GM12878 (cell line): ENCODE measurements at regions of chr1 and their contacts with region 1.

Region 1: GRCh38 chr1:181479137-181479745 is 4.1 kb upstream of the CACNA1E start:
- DNase-seq: peak; percentile 56
- ATAC-seq: peak; percentile 66
- H3K4me3 ChIP-seq: no peak overlapping the region
- H3K27ac ChIP-seq: no peak overlapping the region
- H3K4me1 ChIP-seq: peaks cover 20% of the 10 kb centered on the region
- H3K27me3 ChIP-seq: no peaks in the 10 kb centered on the region
- CTCF ChIP-seq: peak; percentile 87 to 95 (median 92)
- EP300 ChIP-seq: no peak
- POLR2A ChIP-seq: no peak
- RAD21 ChIP-seq: peak; percentile 95

Region 2: DNA sequence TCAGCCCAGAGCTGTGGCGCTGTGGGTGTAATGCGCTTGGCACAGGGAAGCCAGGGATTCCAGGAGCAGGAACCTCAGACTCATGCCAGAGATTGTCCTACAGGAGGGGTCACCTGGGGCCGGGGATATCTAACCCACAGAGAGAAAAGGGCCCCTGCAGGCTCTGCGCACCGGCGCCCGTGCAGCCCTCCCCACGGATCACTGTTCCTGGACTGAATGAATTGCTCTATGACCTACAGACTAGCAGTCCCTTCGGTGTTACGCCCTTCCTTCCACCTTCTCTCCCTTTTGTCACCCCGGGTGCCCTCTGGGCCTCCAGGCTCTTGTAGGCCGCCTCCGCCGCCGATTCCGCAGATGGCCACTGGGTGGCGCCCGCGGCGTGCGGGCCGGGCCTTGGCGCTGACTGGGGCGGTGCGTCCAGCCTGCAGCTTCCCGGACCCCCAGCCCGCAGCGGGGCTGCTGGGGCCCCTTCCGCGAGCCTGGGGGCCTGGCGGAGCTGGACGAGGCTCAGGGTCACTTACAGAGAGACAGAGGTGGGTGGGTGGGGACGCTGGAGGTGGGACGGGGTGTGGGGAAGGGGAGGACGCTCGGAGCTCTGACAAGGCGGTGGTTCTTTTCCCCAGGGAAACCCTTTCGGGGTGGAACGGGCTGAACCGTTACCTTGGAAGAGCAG is 289.4 kb before region 1 on chr1:
- CTCF ChIA-PET with region 1: interaction called, 10 read pairs
- POLR2A ChIA-PET with region 1: no interaction called
- RAD21 ChIA-PET with region 1: interaction called, 9 read pairs
- SMC1A ChIA-PET with region 1: interaction called, 20 read pairs
- in situ Hi-C with region 1: no loop called
- intact Hi-C with region 1: loop called (anchors 5 kb)
- DNase-seq: no peak
- ATAC-seq: peak; percentile 98
- H3K4me3 ChIP-seq: no peak overlapping the region
- H3K27ac ChIP-seq: no peak overlapping the region
- H3K4me1 ChIP-seq: no peaks in the 10 kb centered on the region
- H3K27me3 ChIP-seq: no peaks in the 10 kb centered on the region
- CTCF ChIP-seq: peak; percentile 95 to 98 (median 97)
- EP300 ChIP-seq: no peak
- POLR2A ChIP-seq: no peak
- RAD21 ChIP-seq: peak; percentile 99

Region 3: GRCh38 chr1:181219938-181220337 is 259.3 kb before region 1 on chr1:
- CTCF ChIA-PET with region 1: no interaction called
- POLR2A ChIA-PET with region 1: no interaction called
- RAD21 ChIA-PET with region 1: no interaction called
- SMC1A ChIA-PET with region 1: no interaction called
- in situ Hi-C with region 1: no loop called
- intact Hi-C with region 1: no loop called
- DNase-seq: no peak
- ATAC-seq: no peak
- H3K4me3 ChIP-seq: no peak overlapping the region
- H3K27ac ChIP-seq: no peak overlapping the region
- H3K4me1 ChIP-seq: no peaks in the 10 kb centered on the region
- H3K27me3 ChIP-seq: peaks cover 0 to 2% of the 10 kb centered on the region in 2 experiments; a peak in 2 of 4 replicates
- CTCF ChIP-seq: no peak
- EP300 ChIP-seq: no peak
- POLR2A ChIP-seq: no peak
- RAD21 ChIP-seq: no peak

Region 4: GRCh38 chr1:181356505-181357340 is 122.5 kb before region 1 on chr1:
- CTCF ChIA-PET with region 1: no interaction called
- POLR2A ChIA-PET with region 1: no interaction called
- RAD21 ChIA-PET with region 1: no interaction called
- SMC1A ChIA-PET with region 1: no interaction called
- in situ Hi-C with region 1: no loop called
- intact Hi-C with region 1: no loop called
- DNase-seq: no peak
- ATAC-seq: no peak; the same call in 2 of the 3 replicates
- H3K4me3 ChIP-seq: no peak overlapping the region
- H3K27ac ChIP-seq: no peak overlapping the region
- H3K4me1 ChIP-seq: no peaks in the 10 kb centered on the region
- H3K27me3 ChIP-seq: 0 out of 4 replicates have a peak, but pooled peaks cover 0 to 4% of the 10 kb centered on the region in 2 experiments
- CTCF ChIP-seq: no peak
- EP300 ChIP-seq: no peak
- POLR2A ChIP-seq: no peak
- RAD21 ChIP-seq: no peak

Region 5: GRCh38 chr1:181438013-181438412 is 41.2 kb before region 1 on chr1:
- CTCF ChIA-PET with region 1: interaction called, 12 read pairs
- POLR2A ChIA-PET with region 1: interaction called, 4 read pairs
- RAD21 ChIA-PET with region 1: interaction called, 11 read pairs
- SMC1A ChIA-PET with region 1: interaction called, 33 read pairs
- in situ Hi-C with region 1: no loop called
- intact Hi-C with region 1: no loop called
- DNase-seq: no peak
- ATAC-seq: peak; percentile 78
- H3K4me3 ChIP-seq: no peak overlapping the region
- H3K27ac ChIP-seq: peak overlapping the region; percentile 15; the same call in 1 of the 2 replicates
- H3K4me1 ChIP-seq: peaks cover 18% of the 10 kb centered on the region
- H3K27me3 ChIP-seq: no peaks in the 10 kb centered on the region
- CTCF ChIP-seq: no peak
- EP300 ChIP-seq: 0 out of 4 replicates have a peak, but pooled peaks of 1 of the 2 experiments have one; percentile 16
- POLR2A ChIP-seq: no peak
- RAD21 ChIP-seq: peak; percentile 16; the same call in 1 of the 2 replicates

Region 6: GRCh38 chr1:181504399-181504842 is 25.2 kb after region 1 on chr1:
- CTCF ChIA-PET with region 1: interaction called, 157 read pairs
- POLR2A ChIA-PET with region 1: interaction called, 135 read pairs
- RAD21 ChIA-PET with region 1: interaction called, 278 read pairs
- SMC1A ChIA-PET with region 1: interaction called, 220 read pairs
- in situ Hi-C with region 1: no loop called
- intact Hi-C with region 1: no loop called
- DNase-seq: no peak
- ATAC-seq: peak; percentile 77
- H3K4me3 ChIP-seq: peak overlapping the region; percentile 14; the same call in 1 of the 2 replicates
- H3K27ac ChIP-seq: peak overlapping the region; percentile 88
- H3K4me1 ChIP-seq: peaks cover 60% of the 10 kb centered on the region
- H3K27me3 ChIP-seq: no peaks in the 10 kb centered on the region
- CTCF ChIP-seq: peak; percentile 50 to 73 (median 70)
- EP300 ChIP-seq: no peak
- POLR2A ChIP-seq: peak; percentile 42
- RAD21 ChIP-seq: peak; percentile 55

Region 7: DNA sequence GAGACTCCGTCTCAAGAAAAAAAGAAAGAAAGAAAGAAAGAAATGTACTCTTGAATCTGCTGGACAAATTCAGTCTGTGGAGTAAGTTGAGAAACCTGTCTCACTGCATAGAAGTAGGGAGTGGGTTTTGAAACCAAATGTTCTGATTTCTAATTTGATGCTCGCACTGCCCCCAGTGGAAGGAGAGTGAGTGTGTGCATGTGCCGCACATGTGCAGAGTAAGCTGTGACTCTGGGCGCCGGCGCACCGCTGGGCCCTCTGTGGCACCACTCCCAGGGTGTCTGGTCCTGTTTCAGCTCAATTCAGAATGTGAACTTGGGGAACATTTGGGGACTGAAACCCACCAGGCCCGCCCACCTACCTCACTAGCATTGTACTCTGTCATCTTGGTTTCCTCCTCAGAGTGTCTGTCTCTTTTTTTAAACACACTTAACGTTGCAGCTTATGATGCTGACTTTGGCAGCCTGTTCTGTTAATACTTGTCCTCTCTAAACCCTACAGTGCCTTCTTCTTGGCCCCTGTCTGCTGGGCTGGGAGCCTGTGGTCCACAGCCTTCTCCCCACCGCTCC is 108.7 kb after region 1 on chr1:
- CTCF ChIA-PET with region 1: interaction called, 10 read pairs
- POLR2A ChIA-PET with region 1: no interaction called
- RAD21 ChIA-PET with region 1: interaction called, 3 read pairs
- SMC1A ChIA-PET with region 1: interaction called, 3 read pairs
- in situ Hi-C with region 1: no loop called
- intact Hi-C with region 1: loop called (anchors 5 kb)
- DNase-seq: no peak
- ATAC-seq: peak; percentile 70
- H3K4me3 ChIP-seq: no peak overlapping the region
- H3K27ac ChIP-seq: no peak overlapping the region
- H3K4me1 ChIP-seq: no peaks in the 10 kb centered on the region
- H3K27me3 ChIP-seq: no peaks in the 10 kb centered on the region
- CTCF ChIP-seq: peak in 1 of 3 experiments; percentile 40; a peak in 2 of 6 replicates
- EP300 ChIP-seq: no peak
- POLR2A ChIP-seq: no peak
- RAD21 ChIP-seq: peak; percentile 25; the same call in 1 of the 2 replicates

Region 8: DNA sequence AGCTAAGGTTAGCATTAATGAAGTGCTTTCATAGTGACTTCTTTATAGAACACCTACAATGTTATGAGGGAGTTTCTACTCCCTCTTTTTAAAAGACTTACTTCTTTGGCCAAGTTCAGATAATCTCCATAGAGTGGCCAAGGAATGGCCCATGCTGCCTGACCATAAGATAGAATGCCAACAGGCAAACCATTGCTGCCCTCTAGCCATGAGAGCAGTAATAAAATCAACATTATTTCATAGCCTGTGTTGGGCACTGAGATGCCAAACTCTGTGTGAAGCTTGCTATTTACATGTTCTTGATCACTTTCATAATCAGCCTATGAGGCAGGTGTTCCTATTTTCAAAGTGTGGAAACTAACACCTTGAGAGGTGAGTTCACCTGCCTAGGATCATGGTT is 450.1 kb after region 1 on chr1:
- CTCF ChIA-PET with region 1: interaction called, 319 read pairs
- POLR2A ChIA-PET with region 1: interaction called, 25 read pairs
- RAD21 ChIA-PET with region 1: interaction called, 299 read pairs
- SMC1A ChIA-PET with region 1: interaction called, 260 read pairs
- in situ Hi-C with region 1: loop called (anchors 5 kb)
- intact Hi-C with region 1: no loop called
- DNase-seq: no peak
- ATAC-seq: no peak
- H3K4me3 ChIP-seq: no peak overlapping the region
- H3K27ac ChIP-seq: no peak overlapping the region
- H3K4me1 ChIP-seq: no peaks in the 10 kb centered on the region
- H3K27me3 ChIP-seq: no peaks in the 10 kb centered on the region
- CTCF ChIP-seq: peak in 1 of 3 experiments; percentile 24; a peak in 1 of 6 replicates
- EP300 ChIP-seq: no peak
- POLR2A ChIP-seq: no peak
- RAD21 ChIP-seq: peak; percentile 24; the same call in 1 of the 2 replicates

Region 9: DNA sequence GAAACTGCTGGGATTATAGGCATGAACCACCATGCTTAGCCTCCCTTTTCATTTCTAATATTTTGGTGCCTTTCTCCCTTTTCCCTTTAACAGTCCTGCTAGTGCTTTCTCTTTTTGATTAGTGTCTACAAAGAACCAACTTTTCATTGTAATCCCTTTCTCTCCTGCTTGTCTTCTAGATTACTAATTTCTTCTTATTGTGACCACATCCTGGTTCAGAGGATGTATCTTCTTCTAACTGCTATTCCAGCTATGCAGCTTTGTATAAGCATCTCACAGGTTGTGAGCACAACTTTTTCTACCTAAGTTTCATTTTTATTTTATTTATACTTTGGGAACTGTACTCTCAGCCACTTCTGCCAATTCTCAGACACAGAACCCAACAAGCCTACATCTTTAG is 567.5 kb after region 1 on chr1:
- CTCF ChIA-PET with region 1: interaction called, 119 read pairs
- POLR2A ChIA-PET with region 1: no interaction called
- RAD21 ChIA-PET with region 1: interaction called, 8 read pairs
- SMC1A ChIA-PET with region 1: interaction called, 58 read pairs
- in situ Hi-C with region 1: loop called (anchors 5 kb)
- intact Hi-C with region 1: no loop called
- DNase-seq: no peak
- ATAC-seq: no peak
- H3K4me3 ChIP-seq: no peak overlapping the region
- H3K27ac ChIP-seq: no peak overlapping the region
- H3K4me1 ChIP-seq: no peaks in the 10 kb centered on the region
- H3K27me3 ChIP-seq: no peaks in the 10 kb centered on the region
- CTCF ChIP-seq: no peak
- EP300 ChIP-seq: no peak
- POLR2A ChIP-seq: no peak
- RAD21 ChIP-seq: no peak